B cell (primary cell): ENCODE measurements at regions of chr2 and their contacts with region 1.

Region 1: DNA sequence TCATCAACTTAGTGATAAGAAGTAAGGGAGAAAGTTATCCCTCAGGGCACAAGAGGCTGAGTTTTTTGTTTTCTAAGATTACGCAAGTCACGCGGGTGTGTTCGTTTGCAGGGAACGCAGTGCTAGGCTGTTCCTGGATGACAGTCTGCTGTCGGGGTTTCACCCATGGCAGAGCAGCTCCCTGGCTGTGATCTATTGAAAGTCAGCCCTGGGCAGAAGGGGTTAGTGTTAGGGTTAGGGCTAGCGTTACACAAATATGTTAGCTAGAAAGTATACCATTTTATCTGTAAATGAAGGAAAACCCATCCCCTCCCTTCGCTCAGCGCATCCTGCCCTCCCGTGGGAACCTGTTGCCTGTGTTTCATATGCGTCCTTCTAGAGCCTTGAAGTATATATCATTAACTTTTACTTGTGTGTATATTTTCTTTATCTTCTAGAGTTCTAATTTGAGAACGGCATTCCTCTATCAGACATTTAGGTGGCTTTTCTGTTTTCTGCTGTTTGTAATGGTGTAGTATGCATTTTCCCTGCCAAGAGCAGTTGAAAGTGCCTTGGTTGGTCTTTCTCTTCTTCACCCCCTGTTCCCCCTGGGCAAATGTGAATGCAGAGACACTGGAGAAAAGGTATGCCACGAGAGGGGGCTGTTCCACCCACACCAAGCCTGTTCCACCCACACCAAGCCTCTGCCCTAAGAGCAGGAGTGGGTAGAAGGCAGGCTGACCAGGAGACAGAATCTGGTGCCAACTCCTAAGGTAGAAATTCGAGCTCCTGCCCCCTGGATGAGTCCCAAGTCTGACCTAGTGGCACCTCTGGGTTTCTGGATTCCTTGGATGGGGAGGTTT is 47.0 kb downstream of the ARMC9 start:
- DNase-seq: peak; percentile 61
- ATAC-seq: peak; percentile 68
- H3K4me3 ChIP-seq: no peak overlapping the region
- H3K4me3 Mint-ChIP-seq: no peak overlapping the region
- H3K27ac ChIP-seq: no peak overlapping the region
- H3K27ac Mint-ChIP-seq: no peak overlapping the region
- H3K4me1 ChIP-seq: no peaks in the 10 kb centered on the region
- H3K4me1 Mint-ChIP-seq: no peaks in the 10 kb centered on the region
- H3K27me3 ChIP-seq: no peaks in the 10 kb centered on the region
- H3K27me3 Mint-ChIP-seq: no peaks in the 10 kb centered on the region
- CTCF ChIP-seq: peak; percentile 54

Region 2: DNA sequence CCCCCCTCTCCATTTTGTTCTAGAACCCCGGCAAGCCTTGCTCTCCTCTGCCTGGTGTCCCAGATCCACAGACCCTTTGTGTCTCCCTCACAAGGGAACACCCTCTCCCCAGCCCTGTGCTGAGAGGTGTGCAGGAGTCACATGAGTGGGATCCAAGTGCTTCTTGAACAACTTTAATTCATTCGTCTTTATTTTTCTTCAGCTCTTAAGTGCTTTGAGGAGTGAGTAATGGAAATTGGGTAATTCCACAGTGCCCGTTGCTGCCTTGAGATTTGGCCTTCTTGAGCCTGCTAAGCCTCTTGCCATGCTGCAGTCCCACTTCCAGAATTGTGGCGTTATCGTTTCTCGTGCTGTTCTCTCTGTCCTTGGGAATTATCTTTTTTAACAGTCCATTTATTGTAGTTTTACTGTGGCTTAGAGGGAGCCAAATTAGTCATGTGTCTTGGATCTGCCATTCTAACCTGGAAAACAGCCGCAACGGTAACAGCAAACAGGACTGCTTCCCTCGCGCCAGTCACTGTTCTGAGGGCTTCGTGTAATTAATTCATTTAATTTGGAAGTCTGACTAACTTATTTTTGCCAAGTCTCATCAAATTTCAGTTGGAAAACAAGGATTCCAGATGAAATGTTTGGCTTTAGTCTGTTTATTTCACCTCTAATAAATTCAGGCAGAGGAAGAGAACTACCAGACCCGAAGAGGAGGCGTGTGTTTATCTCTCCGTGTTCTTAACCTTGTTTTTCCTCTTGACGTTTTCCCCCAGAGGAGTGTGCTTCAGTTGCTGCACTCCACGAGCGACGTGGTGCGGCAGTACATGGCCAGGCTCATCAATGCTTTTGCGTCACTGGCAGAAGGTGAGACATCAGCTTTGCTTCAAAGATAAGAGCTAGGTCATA is 25.0 kb after region 1 on chr2:
- CTCF ChIA-PET with region 1: no interaction called
- POLR2A ChIA-PET with region 1: interaction called, 13 read pairs
- intact Hi-C with region 1: no loop called
- DNase-seq: no peak
- ATAC-seq: no peak
- H3K4me3 ChIP-seq: no peak overlapping the region
- H3K4me3 Mint-ChIP-seq: no peak overlapping the region
- H3K27ac ChIP-seq: no peak overlapping the region
- H3K27ac Mint-ChIP-seq: no peak overlapping the region
- H3K4me1 ChIP-seq: no peaks in the 10 kb centered on the region
- H3K4me1 Mint-ChIP-seq: peaks cover 2% of the 10 kb centered on the region
- H3K27me3 ChIP-seq: no peaks in the 10 kb centered on the region
- H3K27me3 Mint-ChIP-seq: no peaks in the 10 kb centered on the region
- CTCF ChIP-seq: no peak

Region 3: DNA sequence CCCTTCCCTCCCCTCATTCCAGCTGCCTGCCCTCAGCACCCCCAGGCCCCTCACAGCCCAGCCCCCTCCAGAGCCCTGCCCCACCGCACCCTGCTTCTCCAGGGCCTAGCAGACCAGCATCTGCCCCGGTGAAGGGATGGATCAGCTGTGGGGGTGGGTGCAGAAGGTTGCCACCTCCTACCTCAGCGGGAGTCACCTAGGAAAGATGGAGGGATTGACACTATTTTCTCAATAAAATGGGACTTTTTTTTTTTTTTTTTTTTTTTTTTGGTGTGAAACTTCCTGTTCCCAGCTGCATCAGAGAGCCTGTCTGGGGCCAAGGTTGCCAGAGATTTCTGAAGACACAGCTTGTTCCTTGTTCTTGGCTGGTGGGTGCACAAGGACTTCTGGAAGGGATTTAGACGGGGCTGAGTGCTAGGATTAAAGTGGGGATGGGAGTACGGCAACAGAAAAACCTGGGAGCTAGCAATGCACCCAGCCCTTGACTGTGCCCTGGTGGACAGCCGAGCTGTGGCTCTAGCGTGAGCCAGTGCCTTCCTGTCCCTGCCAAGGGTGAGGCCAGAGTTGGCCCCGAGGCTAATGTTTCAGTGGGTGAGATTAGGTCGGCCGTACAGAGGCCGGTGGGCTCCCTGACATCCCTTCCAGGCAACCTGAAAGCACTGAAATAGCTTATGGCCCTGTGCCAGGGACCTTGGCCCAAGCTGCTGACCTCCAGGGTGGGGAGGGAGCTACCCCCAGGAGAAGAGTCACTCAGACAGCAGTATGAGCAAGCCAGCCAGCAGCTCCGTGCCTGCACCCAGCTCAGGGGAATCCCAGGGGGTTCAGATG is 154.6 kb after region 1 on chr2:
- CTCF ChIA-PET with region 1: interaction called, 13 read pairs
- POLR2A ChIA-PET with region 1: no interaction called
- intact Hi-C with region 1: loop called (anchors 1 kb)
- DNase-seq: no peak
- ATAC-seq: no peak
- H3K4me3 ChIP-seq: no peak overlapping the region
- H3K4me3 Mint-ChIP-seq: no peak overlapping the region
- H3K27ac ChIP-seq: no peak overlapping the region
- H3K27ac Mint-ChIP-seq: peak overlapping the region; percentile 56
- H3K4me1 ChIP-seq: peaks cover 7 to 13% of the 10 kb centered on the region in 2 donors
- H3K4me1 Mint-ChIP-seq: peaks cover 27% of the 10 kb centered on the region
- H3K27me3 ChIP-seq: no peaks in the 10 kb centered on the region
- H3K27me3 Mint-ChIP-seq: no peaks in the 10 kb centered on the region
- CTCF ChIP-seq: no peak

Region 4: GRCh38 chr2:231411831-231412617 is 166.6 kb after region 1 on chr2:
- CTCF ChIA-PET with region 1: interaction called, 12 read pairs
- POLR2A ChIA-PET with region 1: no interaction called
- intact Hi-C with region 1: loop called (anchors 2 kb)
- DNase-seq: peak; percentile 88
- ATAC-seq: peak; percentile 100
- H3K4me3 ChIP-seq: peak overlapping the region in 4 of 5 experiments; percentile 10 to 62 (median 52)
- H3K4me3 Mint-ChIP-seq: peak overlapping the region; percentile 80
- H3K27ac ChIP-seq: no peak overlapping the region
- H3K27ac Mint-ChIP-seq: no peak overlapping the region
- H3K4me1 ChIP-seq: peaks cover 12 to 13% of the 10 kb centered on the region in 2 donors
- H3K4me1 Mint-ChIP-seq: peaks cover 7% of the 10 kb centered on the region
- H3K27me3 ChIP-seq: peaks cover 0 to 24% (median 10%) of the 10 kb centered on the region in 4 experiments
- H3K27me3 Mint-ChIP-seq: peaks cover 21% of the 10 kb centered on the region
- CTCF ChIP-seq: peak; percentile 87